IMR-90 (cell line): ENCODE measurements at regions of chr3 and their contacts with region 1.

Region 1: GRCh38 chr3:100941041-100941440 is 52.2 kb downstream of the ABI3BP start:
- DNase-seq: no peak
- ATAC-seq: no peak
- H3K4me3 ChIP-seq: no peak overlapping the region
- H3K27ac ChIP-seq: no peak overlapping the region
- H3K4me1 ChIP-seq: no peaks in the 10 kb centered on the region
- H3K27me3 ChIP-seq: no peaks in the 10 kb centered on the region
- CTCF ChIP-seq: no peak
- POLR2A ChIP-seq: no peak
- RAD21 ChIP-seq: no peak

Region 2: DNA sequence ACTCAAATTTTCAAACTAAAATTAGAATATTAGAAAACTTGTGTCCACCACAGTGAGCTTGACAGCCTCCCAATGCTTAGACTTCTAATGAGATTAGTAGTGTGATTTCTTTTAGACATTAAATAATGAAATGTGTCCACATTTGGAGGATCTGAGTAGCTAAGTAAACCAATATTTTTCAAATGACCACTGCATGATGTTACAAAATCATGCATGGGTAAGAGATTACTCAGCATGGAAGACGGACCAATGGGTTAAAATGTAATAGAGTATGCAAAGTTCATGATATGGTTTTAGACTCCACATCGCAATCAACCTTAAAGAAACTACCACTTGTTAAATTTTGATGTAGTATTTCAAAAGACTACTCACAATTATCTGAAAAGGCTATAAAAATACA is 248.8 kb after region 1 on chr3:
- CTCF ChIA-PET with region 1: no interaction called
- POLR2A ChIA-PET with region 1: interaction called, 19 read pairs
- dilution Hi-C with region 1: no loop called
- in situ Hi-C with region 1: no loop called
- intact Hi-C with region 1: no loop called
- DNase-seq: peak; percentile 82
- ATAC-seq: peak; percentile 82
- H3K4me3 ChIP-seq: no peak overlapping the region
- H3K27ac ChIP-seq: no peak overlapping the region
- H3K4me1 ChIP-seq: peaks cover 3% of the 10 kb centered on the region; the same call in 1 of the 2 replicates
- H3K27me3 ChIP-seq: no peaks in the 10 kb centered on the region
- CTCF ChIP-seq: no peak
- POLR2A ChIP-seq: no peak
- RAD21 ChIP-seq: no peak